Adrenal gland (tissue), 19 donors: ENCODE measurements at regions of chr5 and their contacts with region 1.

Region 1: GRCh38 chr5:94976853-94977252 is 308.0 kb downstream of the MCTP1 start:
- DNase-seq: no peak
- H3K4me3 ChIP-seq: no peak overlapping the region
- H3K27ac ChIP-seq: no peak overlapping the region
- H3K4me1 ChIP-seq: no peaks in the 10 kb centered on the region
- H3K27me3 ChIP-seq: no peaks in the 10 kb centered on the region
- CTCF ChIP-seq: no peak
- POLR2A ChIP-seq: no peak

Region 2: DNA sequence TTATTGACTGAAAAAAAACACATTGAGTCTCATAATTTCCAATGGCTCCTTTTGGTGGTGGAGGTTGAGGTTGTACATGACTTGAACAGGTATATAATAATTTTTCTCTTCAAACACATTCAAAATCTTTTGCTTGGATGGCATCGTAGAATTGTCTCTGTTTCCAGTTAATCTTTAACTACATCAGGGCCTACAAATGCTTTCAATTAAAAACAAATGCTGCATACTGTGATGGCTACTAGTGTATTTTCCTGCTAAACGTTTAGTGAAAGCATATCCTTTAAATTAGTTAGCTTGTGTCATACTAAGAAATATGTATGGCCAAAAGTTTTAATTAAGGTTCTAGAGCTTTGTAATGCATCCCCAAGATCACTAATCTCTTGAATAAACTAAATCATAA is 44.6 kb before region 1 on chr5:
- intact Hi-C with region 1: no loop called
- DNase-seq: no peak
- H3K4me3 ChIP-seq: no peak overlapping the region
- H3K27ac ChIP-seq: no peak overlapping the region
- H3K4me1 ChIP-seq: no peaks in the 10 kb centered on the region
- H3K27me3 ChIP-seq: no peaks in the 10 kb centered on the region
- CTCF ChIP-seq: no peak
- POLR2A ChIP-seq: no peak

Region 3: GRCh38 chr5:95256991-95257390 is 280.1 kb after region 1 on chr5:
- intact Hi-C with region 1: loop called in 1 of 2 experiments (anchors 10 kb)
- DNase-seq: no peak
- H3K4me3 ChIP-seq: no peak overlapping the region
- H3K27ac ChIP-seq: no peak overlapping the region
- H3K4me1 ChIP-seq: no peaks in the 10 kb centered on the region
- H3K27me3 ChIP-seq: no peaks in the 10 kb centered on the region
- CTCF ChIP-seq: no peak
- POLR2A ChIP-seq: no peak